Left ventricle myocardium superior (tissue), 1 donor: ENCODE measurements at regions of chr3 and their contacts with region 1.

Region 1: DNA sequence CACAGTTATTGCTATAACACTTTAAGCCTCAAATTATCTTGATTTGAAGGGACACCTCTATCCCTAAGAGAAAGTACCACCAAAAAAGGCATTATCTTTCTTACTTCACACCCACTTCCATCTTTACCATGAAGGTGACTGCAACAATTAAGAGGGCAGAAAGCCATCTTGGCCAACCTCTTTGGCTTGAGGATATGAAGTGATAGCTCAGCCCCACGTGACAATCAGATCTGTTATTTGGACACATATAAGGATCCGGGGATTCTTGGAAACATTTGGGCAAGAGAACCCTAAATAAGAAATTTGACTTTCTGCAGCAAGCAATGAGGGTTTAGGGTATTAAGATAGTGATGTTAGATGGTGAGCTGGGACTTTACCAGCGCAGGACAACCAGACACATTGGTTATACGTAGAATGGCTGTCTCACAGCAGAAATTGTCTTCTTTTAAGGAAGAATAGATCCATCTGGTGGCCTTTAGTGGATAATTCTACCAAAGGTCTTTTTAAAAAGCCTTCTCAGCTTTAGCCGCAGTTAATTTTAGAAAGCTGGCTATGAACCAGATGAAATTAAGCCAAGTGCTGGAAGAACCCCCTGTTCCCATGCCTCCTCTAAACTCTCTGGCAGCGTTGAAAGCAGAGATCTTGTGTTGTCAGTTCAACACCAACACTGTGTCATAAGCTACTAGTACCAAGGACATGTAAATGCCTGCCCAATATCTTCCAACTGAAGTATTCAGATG is 12.3 kb downstream of the HCLS1 start:
- DNase-seq: no peak
- ATAC-seq: peak; percentile 99

Region 2: DNA sequence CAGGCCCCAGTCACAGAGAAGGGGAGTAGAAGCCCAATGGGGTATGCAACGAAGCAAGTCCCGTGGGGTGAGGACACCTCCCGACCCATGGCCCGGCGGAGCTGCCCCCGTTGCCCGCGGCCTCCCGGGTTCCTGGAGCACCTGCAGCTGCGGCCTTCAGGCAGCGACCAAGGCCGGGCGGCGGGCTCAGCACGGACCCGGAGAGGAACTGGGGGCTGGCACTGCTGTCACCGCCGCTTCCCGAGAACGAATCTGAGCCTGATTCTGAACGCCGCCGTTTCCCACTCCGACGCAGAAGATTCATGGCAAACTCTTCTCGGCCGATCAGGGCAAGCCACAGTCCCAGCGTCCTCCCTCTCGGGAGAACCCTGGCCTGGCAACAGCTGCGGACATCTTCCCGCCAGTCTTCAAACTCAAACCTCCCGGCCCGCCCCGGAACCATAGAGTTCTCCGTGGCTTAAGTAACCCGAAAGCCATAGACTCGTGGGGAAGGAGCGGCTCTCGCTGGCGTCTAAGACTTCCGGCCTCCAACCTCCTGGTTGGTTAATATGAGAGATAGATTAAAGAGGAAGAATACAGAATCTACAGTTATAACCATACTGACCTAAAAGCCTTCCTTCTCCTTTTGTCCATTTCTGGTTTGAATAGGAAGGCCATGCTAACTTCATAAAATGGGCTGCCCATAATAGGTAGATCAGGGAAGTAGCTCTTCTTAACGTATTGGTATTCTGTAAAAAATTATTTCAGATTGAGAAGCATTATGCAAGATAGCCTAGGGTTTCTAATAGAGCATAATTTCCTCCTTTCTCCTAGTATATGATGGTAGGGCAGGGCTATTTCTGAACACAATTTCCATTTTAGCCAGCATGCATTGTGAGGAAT is 102.6 kb before region 1 on chr3 and contains the start of gene POLQ:
- intact Hi-C with region 1: loop called (anchors 5 kb)
- DNase-seq: peak; percentile 90
- ATAC-seq: peak; percentile 100
- total RNA-seq, gene POLQ: 0.79 TPM

Region 3: DNA sequence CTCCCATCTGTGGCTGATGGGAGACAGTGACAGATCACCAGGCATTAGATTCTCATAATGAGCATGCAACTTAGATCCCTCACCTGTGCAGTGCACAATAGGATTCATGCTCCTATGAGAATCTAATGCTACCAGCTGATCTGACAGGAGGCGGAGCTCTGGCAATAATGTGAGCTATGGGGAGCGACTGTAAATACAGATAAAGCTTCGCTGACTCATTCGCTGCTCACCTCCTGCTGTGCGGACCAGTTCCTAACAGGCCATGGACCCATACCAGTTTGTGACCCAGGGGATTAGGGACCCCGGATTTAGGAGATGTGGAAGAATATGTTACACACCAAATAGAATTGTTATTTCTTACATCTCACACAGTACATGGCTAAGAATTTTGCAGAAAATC is 73.9 kb before region 1 on chr3:
- intact Hi-C with region 1: no loop called
- DNase-seq: no peak
- ATAC-seq: peak; percentile 60